CD4-positive, alpha-beta T cell (primary cell): ENCODE measurements at regions of chr18 and their contacts with region 1.

Region 1: GRCh38 chr18:22800551-22800951 is 132.6 kb upstream of the RBBP8 start:
- DNase-seq: no peak
- ATAC-seq: no peak
- H3K4me3 ChIP-seq: no peak overlapping the region
- H3K4me3 Mint-ChIP-seq: no peak overlapping the region
- H3K27ac ChIP-seq: no peak overlapping the region
- H3K27ac Mint-ChIP-seq: no peak overlapping the region
- H3K4me1 ChIP-seq: no peaks in the 10 kb centered on the region
- H3K4me1 Mint-ChIP-seq: no peaks in the 10 kb centered on the region
- H3K27me3 ChIP-seq: peaks cover 0 to 4% of the 10 kb centered on the region in 2 experiments
- H3K27me3 Mint-ChIP-seq: peaks cover 5% of the 10 kb centered on the region
- CTCF ChIP-seq: no peak

Region 2: DNA sequence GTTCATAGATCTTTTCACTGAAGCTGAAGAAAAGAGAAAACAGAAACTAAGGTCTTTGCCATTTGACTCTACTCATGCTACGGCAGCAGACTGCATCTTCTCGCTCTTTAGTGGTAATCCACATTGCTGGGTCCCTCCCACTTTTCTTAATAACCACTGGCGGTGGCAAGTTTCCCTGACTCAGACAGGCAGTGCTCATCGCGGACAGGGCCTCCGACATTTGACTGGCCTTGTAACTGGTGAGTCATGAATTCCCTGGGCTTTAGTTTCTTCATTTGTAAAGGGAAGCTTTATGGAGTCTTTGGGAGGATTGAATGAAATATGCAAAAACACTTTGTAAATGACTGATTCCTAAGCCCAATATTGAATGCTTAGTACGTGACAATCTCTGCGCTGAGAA is 105.6 kb before region 1 on chr18:
- CTCF ChIA-PET with region 1: no interaction called
- POLR2A ChIA-PET with region 1: no interaction called
- intact Hi-C with region 1: no loop called
- DNase-seq: no peak
- ATAC-seq: no peak
- H3K4me3 ChIP-seq: no peak overlapping the region
- H3K4me3 Mint-ChIP-seq: no peak overlapping the region
- H3K27ac ChIP-seq: no peak overlapping the region
- H3K27ac Mint-ChIP-seq: no peak overlapping the region
- H3K4me1 ChIP-seq: no peaks in the 10 kb centered on the region
- H3K4me1 Mint-ChIP-seq: no peaks in the 10 kb centered on the region
- H3K27me3 ChIP-seq: no peaks in the 10 kb centered on the region
- H3K27me3 Mint-ChIP-seq: peaks cover 3% of the 10 kb centered on the region
- CTCF ChIP-seq: no peak

Region 3: DNA sequence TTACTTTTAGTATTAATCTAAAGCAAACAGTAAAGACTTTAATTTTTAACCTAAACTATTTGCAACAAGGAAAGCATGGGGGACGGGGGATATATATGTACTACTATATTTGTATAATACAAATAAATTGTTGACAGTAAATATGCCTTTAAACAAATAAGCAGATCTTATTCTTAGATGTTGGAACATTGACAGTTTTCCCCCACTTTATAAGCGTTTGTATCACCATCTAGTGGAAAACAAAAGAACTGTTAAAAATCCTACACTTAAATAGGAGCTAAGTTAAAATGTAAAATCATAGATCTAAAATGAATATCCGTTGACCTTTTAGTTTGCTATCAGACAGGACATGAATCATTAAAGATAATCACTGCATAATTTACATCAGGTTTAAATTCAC is 182.6 kb after region 1 on chr18:
- CTCF ChIA-PET with region 1: interaction called, 8 read pairs
- POLR2A ChIA-PET with region 1: no interaction called
- intact Hi-C with region 1: loop called (anchors 1 to 2 kb)
- DNase-seq: peak in 3 of 14 experiments; percentile 42 to 46 (median 45)
- ATAC-seq: no peak
- H3K4me3 ChIP-seq: no peak overlapping the region
- H3K4me3 Mint-ChIP-seq: no peak overlapping the region
- H3K27ac ChIP-seq: no peak overlapping the region
- H3K27ac Mint-ChIP-seq: no peak overlapping the region
- H3K4me1 ChIP-seq: no peaks in the 10 kb centered on the region
- H3K4me1 Mint-ChIP-seq: no peaks in the 10 kb centered on the region
- H3K27me3 ChIP-seq: no peaks in the 10 kb centered on the region
- H3K27me3 Mint-ChIP-seq: no peaks in the 10 kb centered on the region
- CTCF ChIP-seq: peak; percentile 68

Region 4: GRCh38 chr18:23406271-23406787 is 605.8 kb after region 1 on chr18:
- CTCF ChIA-PET with region 1: interaction called, 9 read pairs
- POLR2A ChIA-PET with region 1: no interaction called
- intact Hi-C with region 1: loop called in 1 of 2 experiments (anchors 1 kb)
- DNase-seq: no peak
- ATAC-seq: no peak
- H3K4me3 ChIP-seq: no peak overlapping the region
- H3K4me3 Mint-ChIP-seq: no peak overlapping the region
- H3K27ac ChIP-seq: no peak overlapping the region
- H3K27ac Mint-ChIP-seq: no peak overlapping the region
- H3K4me1 ChIP-seq: no peaks in the 10 kb centered on the region
- H3K4me1 Mint-ChIP-seq: no peaks in the 10 kb centered on the region
- H3K27me3 ChIP-seq: no peaks in the 10 kb centered on the region
- H3K27me3 Mint-ChIP-seq: no peaks in the 10 kb centered on the region
- CTCF ChIP-seq: no peak

Region 5: GRCh38 chr18:23412351-23412964 is 611.9 kb after region 1 on chr18:
- CTCF ChIA-PET with region 1: interaction called, 9 read pairs
- POLR2A ChIA-PET with region 1: no interaction called
- intact Hi-C with region 1: loop called (anchors 1 to 2 kb)
- DNase-seq: no peak
- ATAC-seq: no peak
- H3K4me3 ChIP-seq: no peak overlapping the region
- H3K4me3 Mint-ChIP-seq: no peak overlapping the region
- H3K27ac ChIP-seq: no peak overlapping the region
- H3K27ac Mint-ChIP-seq: no peak overlapping the region
- H3K4me1 ChIP-seq: no peaks in the 10 kb centered on the region
- H3K4me1 Mint-ChIP-seq: no peaks in the 10 kb centered on the region
- H3K27me3 ChIP-seq: no peaks in the 10 kb centered on the region
- H3K27me3 Mint-ChIP-seq: no peaks in the 10 kb centered on the region
- CTCF ChIP-seq: no peak